ENCODE measurements at regions of chr16 and their contacts with region 1.

Region 1: GRCh38 chr16:18983565-18984424 is at the start of gene TMC7:
- DNase-seq: peak; percentile 70 to 94
- H3K4me3 ChIP-seq: peak within 1 kb of the TSS; percentile 74
- H3K27ac ChIP-seq: no peak within 1 kb of the TSS
- H3K4me1 ChIP-seq: peaks cover 28% of the 10 kb centered on the region
- H3K27me3 ChIP-seq: no peaks in the 10 kb centered on the region
- CTCF ChIP-seq: peak; percentile 79
- total RNA-seq, gene TMC7: 4.3 and 4.4 TPM in 2 replicates

Region 2: GRCh38 chr16:18801197-18801972 is 182.4 kb before region 1 on chr16 and contains the start of gene ARL6IP1:
- CTCF ChIA-PET with region 1: interaction called, 6 read pairs
- POLR2A ChIA-PET with region 1: no interaction called
- intact Hi-C with region 1: loop called (anchors 5 kb)
- DNase-seq: peak; percentile 98 to 99
- H3K4me3 ChIP-seq: peak within 1 kb of the TSS; percentile 98
- H3K27ac ChIP-seq: peak within 1 kb of the TSS; percentile 85
- H3K4me1 ChIP-seq: peaks cover 48% of the 10 kb centered on the region
- H3K27me3 ChIP-seq: no peaks in the 10 kb centered on the region
- CTCF ChIP-seq: peak; percentile 91
- total RNA-seq, gene ARL6IP1: 294 and 338 TPM in 2 replicates

Region 3: DNA sequence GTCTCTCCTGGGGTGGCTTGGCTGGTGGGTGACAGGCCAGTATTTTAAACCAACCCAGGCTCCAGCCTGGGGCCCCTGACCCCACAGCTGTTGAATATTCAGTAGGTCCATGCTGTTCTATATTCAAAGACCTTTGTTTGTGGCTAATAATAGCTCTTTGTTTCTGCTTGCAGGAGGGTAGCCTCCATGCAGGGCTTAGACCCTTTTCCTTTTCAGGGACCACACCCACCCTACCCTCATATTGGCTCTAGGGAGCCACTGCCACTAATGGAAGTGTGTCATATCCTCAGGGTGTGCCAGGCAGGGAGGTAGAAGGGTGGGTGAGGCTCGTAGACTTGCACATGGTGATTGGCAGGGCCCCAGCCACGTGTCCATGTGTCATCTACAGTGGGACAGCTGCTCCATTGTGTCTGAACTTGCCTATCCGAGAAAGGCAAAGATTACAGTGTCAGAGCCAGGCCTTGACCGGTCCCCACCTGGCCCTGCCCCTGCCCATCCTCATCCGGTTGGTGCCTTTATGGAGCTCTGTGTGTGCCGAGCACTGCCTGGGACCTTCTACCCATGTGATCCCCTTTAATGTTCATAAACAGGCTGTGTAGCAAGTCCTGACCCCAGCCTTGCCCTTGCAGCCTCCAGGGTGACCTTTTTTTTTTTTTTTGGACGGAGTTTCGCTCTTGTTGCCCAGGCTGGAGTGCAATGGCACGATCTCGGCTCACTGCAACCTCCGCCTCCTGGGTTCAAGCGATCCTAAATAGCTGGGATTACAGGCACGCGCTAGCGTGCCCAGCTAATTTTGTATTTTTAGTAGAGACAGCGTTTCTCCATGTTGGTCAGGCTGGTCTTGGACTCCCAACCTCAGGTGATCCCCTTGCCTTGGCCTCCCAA is 22.0 kb after region 1 on chr16:
- CTCF ChIA-PET with region 1: interaction called, 19 read pairs
- POLR2A ChIA-PET with region 1: interaction called, 6 read pairs
- intact Hi-C with region 1: loop called (anchors 1 kb)
- DNase-seq: peak; percentile 55 to 76
- H3K4me3 ChIP-seq: no peak overlapping the region
- H3K27ac ChIP-seq: peak overlapping the region; percentile 33; the same call in 1 of the 2 replicates
- H3K4me1 ChIP-seq: peaks cover 11% of the 10 kb centered on the region
- H3K27me3 ChIP-seq: no peaks in the 10 kb centered on the region
- CTCF ChIP-seq: no peak

Region 4: GRCh38 chr16:19044769-19045168 is 61.0 kb after region 1 on chr16:
- CTCF ChIA-PET with region 1: no interaction called
- POLR2A ChIA-PET with region 1: interaction called, 16 read pairs
- intact Hi-C with region 1: no loop called
- DNase-seq: no peak
- H3K4me3 ChIP-seq: no peak overlapping the region
- H3K27ac ChIP-seq: no peak overlapping the region
- H3K4me1 ChIP-seq: no peaks in the 10 kb centered on the region
- H3K27me3 ChIP-seq: no peaks in the 10 kb centered on the region
- CTCF ChIP-seq: no peak

Measured in PC-9 (cell line).